ENCODE measurements at regions of chr2 and their contacts with region 1.

Region 1: GRCh38 chr2:234550511-234551107 is 53.7 kb upstream of the ARL4C start:
- DNase-seq: peak; percentile 24 to 65 (median 52)
- ATAC-seq: peak; percentile 86
- H3K4me3 ChIP-seq: no peak overlapping the region
- H3K4me3 Mint-ChIP-seq: no peak overlapping the region
- H3K27ac ChIP-seq: no peak overlapping the region
- H3K27ac Mint-ChIP-seq: no peak overlapping the region
- H3K4me1 ChIP-seq: no peaks in the 10 kb centered on the region
- H3K4me1 Mint-ChIP-seq: peaks cover 0 to 9% (median 4%) of the 10 kb centered on the region in 7 donors
- H3K27me3 ChIP-seq: no peaks in the 10 kb centered on the region
- H3K27me3 Mint-ChIP-seq: peaks cover 5 to 29% (median 20%) of the 10 kb centered on the region in 5 donors

Region 2: GRCh38 chr2:233178994-233179847 is 1371.4 kb before region 1 on chr2:
- CTCF ChIA-PET with region 1: no interaction called
- POLR2A ChIA-PET with region 1: no interaction called
- intact Hi-C with region 1: no loop called
- DNase-seq: no peak
- ATAC-seq: no peak
- H3K4me3 ChIP-seq: no peak overlapping the region
- H3K4me3 Mint-ChIP-seq: no peak overlapping the region
- H3K27ac ChIP-seq: no peak overlapping the region
- H3K27ac Mint-ChIP-seq: peak overlapping the region in 8 of 9 donors; percentile 46 to 83 (median 68)
- H3K4me1 ChIP-seq: no peaks in the 10 kb centered on the region
- H3K4me1 Mint-ChIP-seq: peaks cover 0 to 13% (median 5%) of the 10 kb centered on the region in 7 donors
- H3K27me3 ChIP-seq: no peaks in the 10 kb centered on the region
- H3K27me3 Mint-ChIP-seq: no peaks in the 10 kb centered on the region

Region 3: DNA sequence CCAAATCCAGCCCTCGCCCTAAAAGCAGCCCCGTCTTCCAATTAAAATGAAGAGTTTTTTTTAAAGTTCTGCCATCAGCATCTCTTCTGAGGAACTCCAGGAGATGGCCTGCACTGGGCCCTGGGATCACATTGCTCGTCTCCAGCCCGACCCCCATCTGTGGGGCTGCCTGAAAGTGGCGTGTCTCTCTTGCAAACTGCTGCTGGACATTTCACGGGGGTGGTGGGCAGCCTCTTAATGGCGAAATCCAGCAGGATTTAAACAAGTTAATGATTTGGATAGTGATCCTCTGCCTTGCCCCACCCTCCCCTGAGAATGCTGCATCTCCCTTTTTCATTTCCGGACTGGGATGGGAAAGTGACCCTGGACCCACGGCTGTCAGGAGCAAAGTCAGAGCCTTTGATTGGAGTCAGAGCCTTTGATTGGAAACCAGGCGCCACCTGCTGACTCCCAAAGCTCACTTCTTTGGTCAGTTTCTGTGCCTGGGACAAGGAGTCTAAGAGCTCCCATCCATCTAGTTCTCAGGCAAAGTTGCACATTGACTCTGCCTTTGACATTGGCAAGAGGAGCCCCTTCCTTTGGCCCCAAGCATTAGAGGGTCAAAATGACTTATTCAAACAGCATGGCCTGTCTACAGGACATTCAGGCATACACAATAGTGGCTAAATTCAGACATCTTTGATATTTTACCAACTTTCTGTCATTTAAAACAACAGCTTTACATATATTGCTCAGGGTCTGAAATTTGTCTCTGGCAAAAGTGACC is 556.4 kb after region 1 on chr2:
- CTCF ChIA-PET with region 1: no interaction called
- POLR2A ChIA-PET with region 1: no interaction called
- intact Hi-C with region 1: loop called (anchors 1 to 2 kb)
- DNase-seq: peak in 1 of 9 donors; percentile 3
- ATAC-seq: no peak
- H3K4me3 ChIP-seq: no peak overlapping the region
- H3K4me3 Mint-ChIP-seq: no peak overlapping the region
- H3K27ac ChIP-seq: no peak overlapping the region
- H3K27ac Mint-ChIP-seq: peak overlapping the region in 1 of 9 donors; percentile 25
- H3K4me1 ChIP-seq: no peaks in the 10 kb centered on the region
- H3K4me1 Mint-ChIP-seq: no peaks in the 10 kb centered on the region
- H3K27me3 ChIP-seq: no peaks in the 10 kb centered on the region
- H3K27me3 Mint-ChIP-seq: peaks cover 0 to 34% (median 13%) of the 10 kb centered on the region in 5 donors

Region 4: DNA sequence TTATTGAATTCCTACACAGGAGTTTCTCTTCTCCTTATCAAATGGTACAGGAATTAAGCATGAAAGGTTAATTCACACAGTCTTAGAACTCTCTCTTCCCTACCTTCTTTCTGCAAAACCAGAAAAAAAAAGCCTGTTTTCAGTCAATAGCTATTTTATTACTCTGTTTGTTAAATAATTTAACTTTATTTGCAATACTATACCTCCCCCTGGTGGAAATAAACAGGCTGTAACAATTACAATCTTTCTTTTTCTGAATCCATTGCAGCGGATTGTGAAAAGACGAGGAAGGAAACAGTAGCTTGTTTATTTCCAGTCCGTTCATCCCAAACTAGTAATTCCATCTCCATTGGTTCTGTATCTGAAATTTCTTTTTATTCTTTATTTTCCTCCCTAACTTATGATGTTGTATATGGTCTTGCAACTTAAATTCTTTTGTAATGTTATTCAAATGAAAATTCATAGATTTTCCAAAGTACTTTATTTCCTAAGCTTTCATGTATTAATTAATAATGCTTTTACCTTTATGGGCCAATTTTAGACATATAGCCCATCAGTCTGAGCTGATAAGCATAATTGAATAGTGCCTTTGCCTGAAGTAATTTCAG is 566.4 kb after region 1 on chr2:
- CTCF ChIA-PET with region 1: no interaction called
- POLR2A ChIA-PET with region 1: no interaction called
- intact Hi-C with region 1: loop called (anchors 1 kb)
- DNase-seq: peak in 4 of 9 donors; percentile 7 to 10 (median 8)
- ATAC-seq: no peak
- H3K4me3 ChIP-seq: no peak overlapping the region
- H3K4me3 Mint-ChIP-seq: no peak overlapping the region
- H3K27ac ChIP-seq: no peak overlapping the region
- H3K27ac Mint-ChIP-seq: no peak overlapping the region
- H3K4me1 ChIP-seq: no peaks in the 10 kb centered on the region
- H3K4me1 Mint-ChIP-seq: no peaks in the 10 kb centered on the region
- H3K27me3 ChIP-seq: no peaks in the 10 kb centered on the region
- H3K27me3 Mint-ChIP-seq: peaks cover 10 to 37% (median 32%) of the 10 kb centered on the region in 5 donors

Region 5: DNA sequence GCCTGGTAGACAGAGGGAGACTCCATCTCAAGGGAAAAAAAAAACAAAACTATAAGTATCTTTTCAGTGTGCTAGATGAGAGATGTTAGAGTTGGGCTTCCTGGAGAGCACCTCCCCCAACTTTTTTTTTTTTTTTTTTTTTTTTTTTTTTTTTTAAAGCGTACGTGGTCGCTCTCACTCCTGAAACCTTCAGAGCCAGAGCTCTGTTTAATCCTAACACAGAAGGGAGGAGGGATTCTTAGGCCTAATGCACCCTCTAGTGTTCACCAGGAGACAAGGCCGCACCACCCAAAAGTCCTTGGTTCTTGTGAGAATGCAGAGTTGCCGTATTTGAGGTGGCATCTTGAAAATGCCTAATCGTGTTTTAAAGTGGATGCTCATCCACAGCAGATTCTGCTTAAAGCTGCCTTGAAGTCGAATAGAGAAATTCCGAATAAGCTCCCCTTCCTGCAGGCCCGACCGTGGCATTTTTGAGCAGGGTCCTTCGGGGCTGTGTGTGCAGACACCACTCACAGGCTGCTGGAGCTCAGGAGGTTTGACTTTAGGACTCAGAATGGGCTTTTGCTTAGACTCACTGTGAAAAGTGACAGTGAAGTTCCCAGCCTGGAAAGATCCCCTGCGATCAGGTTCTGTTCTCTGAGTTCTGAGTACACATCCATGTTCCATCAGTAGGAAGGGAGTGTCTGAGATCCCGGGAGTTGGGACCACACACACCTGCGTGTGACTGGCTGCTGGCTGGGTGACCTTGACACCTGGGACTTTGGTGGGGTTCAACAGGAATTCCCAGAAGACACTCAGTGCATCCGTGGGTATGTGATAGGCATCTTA is 1195.9 kb after region 1 on chr2:
- CTCF ChIA-PET with region 1: no interaction called
- POLR2A ChIA-PET with region 1: no interaction called
- intact Hi-C with region 1: loop called in 1 of 2 experiments (anchors 2 kb)
- DNase-seq: peak in 7 of 9 donors; percentile 4 to 47 (median 32)
- ATAC-seq: peak; percentile 74
- H3K4me3 ChIP-seq: no peak overlapping the region
- H3K4me3 Mint-ChIP-seq: no peak overlapping the region
- H3K27ac ChIP-seq: no peak overlapping the region
- H3K27ac Mint-ChIP-seq: no peak overlapping the region
- H3K4me1 ChIP-seq: no peaks in the 10 kb centered on the region
- H3K4me1 Mint-ChIP-seq: no peaks in the 10 kb centered on the region
- H3K27me3 ChIP-seq: no peaks in the 10 kb centered on the region
- H3K27me3 Mint-ChIP-seq: peaks cover 0 to 26% (median 5%) of the 10 kb centered on the region in 5 donors

Measured in naive thymus-derived CD4-positive, alpha-beta T cell (primary cell).